ENCODE measurements at regions of chr12 and their contacts with region 1.

Region 1: GRCh38 chr12:53675651-53676453 is at the start of gene ATP5MC2:
- DNase-seq: peak; percentile 98
- H3K4me3 ChIP-seq: peak within 1 kb of the TSS; percentile 53 to 70 (median 61)
- H3K27ac ChIP-seq: peak within 1 kb of the TSS; percentile 51
- H3K4me1 ChIP-seq: peaks cover 23% of the 10 kb centered on the region
- H3K27me3 ChIP-seq: no peaks in the 10 kb centered on the region
- CTCF ChIP-seq: peak; percentile 95 to 100
- total RNA-seq, gene ATP5MC2: 47.2 to 140 TPM

Region 2: DNA sequence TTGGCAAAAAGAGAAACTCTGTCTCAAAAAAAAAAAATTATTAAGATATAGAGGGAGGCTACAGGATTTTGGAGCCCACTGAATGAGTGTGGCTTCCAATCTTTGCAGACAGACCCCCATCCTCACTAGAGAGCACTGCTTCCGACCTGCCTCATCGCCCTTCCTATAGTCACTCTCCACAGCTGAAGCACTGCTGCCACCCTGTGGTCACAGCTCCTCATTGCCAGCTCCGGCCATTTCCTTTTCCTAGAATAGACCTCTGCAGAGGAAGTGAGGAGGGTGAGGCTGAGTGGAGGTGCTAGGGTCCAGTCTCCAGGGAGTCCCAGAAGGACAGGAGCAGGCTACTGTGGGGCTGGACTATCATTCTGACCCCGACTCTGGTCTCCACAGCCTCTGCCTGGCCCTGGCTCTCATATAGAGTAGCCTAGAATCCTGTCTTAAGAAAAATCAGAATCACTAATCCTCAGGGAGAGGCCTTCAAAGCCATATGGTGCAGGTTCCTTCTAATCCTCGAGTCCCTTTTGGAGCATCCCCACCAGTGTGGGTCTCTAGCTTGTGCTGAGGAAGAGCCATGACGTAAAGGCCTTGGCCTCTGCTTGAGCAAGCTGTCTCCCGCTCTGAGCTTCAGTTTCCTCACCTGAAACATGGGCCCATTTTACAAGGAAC is 167.2 kb before region 1 on chr12:
- CTCF ChIA-PET with region 1: no interaction called
- dilution Hi-C with region 1: no loop called
- in situ Hi-C with region 1: no loop called
- intact Hi-C with region 1: loop called (anchors 1 kb)
- DNase-seq: peak; percentile 61
- H3K4me3 ChIP-seq: no peak overlapping the region
- H3K27ac ChIP-seq: no peak overlapping the region
- H3K4me1 ChIP-seq: no peaks in the 10 kb centered on the region
- H3K27me3 ChIP-seq: no peaks in the 10 kb centered on the region
- CTCF ChIP-seq: peak; percentile 93 to 97

Region 3: DNA sequence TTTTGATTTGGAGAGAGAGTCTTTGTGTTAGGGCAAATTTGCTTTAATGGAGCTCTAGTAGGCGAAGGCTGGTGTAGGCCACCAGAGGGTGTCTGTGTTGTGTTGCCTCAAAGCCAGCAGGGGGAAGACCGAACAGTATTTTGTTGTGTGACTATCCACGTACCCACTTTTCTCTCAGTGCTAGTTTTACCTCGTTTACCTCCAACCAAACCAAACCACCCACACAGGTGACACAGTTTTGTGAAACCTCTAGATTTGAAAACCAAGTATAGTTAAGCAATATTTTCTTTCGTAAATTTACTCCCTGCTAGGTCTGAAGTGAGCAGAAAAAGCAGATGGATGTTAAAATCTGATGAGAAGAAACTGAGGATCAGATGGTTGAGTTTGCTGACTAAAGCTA is 132.3 kb before region 1 on chr12:
- CTCF ChIA-PET with region 1: interaction called, 8 read pairs
- dilution Hi-C with region 1: no loop called
- in situ Hi-C with region 1: loop called (anchors 5 kb)
- intact Hi-C with region 1: loop called (anchors 1 kb)
- DNase-seq: peak; percentile 62
- H3K4me3 ChIP-seq: no peak overlapping the region
- H3K27ac ChIP-seq: no peak overlapping the region
- H3K4me1 ChIP-seq: peaks cover 2% of the 10 kb centered on the region
- H3K27me3 ChIP-seq: no peaks in the 10 kb centered on the region
- CTCF ChIP-seq: peak; percentile 80 to 87

Region 4: DNA sequence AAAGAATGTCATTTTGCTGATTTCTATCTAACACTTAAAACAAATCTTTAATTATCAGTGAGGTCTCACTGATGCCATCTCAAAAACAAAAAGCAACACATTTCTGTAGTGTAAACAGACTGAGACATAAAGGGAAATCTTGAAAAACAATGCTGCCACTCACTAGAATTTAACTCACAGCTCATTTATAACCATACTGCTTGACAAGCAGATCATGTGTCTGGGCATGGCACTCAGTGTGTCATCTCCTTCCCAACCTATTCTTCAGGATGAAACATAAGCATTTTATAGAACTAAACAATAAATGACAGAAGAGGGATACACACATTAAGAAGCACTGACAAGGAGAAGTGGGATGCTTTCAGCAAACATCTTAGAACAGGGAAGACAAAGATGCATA is 72.0 kb before region 1 on chr12:
- CTCF ChIA-PET with region 1: no interaction called
- dilution Hi-C with region 1: no loop called
- in situ Hi-C with region 1: no loop called
- intact Hi-C with region 1: loop called (anchors 1 kb)
- DNase-seq: no peak
- H3K4me3 ChIP-seq: no peak overlapping the region
- H3K27ac ChIP-seq: no peak overlapping the region
- H3K4me1 ChIP-seq: peaks cover 12% of the 10 kb centered on the region
- H3K27me3 ChIP-seq: no peaks in the 10 kb centered on the region
- CTCF ChIP-seq: no peak

Region 5: DNA sequence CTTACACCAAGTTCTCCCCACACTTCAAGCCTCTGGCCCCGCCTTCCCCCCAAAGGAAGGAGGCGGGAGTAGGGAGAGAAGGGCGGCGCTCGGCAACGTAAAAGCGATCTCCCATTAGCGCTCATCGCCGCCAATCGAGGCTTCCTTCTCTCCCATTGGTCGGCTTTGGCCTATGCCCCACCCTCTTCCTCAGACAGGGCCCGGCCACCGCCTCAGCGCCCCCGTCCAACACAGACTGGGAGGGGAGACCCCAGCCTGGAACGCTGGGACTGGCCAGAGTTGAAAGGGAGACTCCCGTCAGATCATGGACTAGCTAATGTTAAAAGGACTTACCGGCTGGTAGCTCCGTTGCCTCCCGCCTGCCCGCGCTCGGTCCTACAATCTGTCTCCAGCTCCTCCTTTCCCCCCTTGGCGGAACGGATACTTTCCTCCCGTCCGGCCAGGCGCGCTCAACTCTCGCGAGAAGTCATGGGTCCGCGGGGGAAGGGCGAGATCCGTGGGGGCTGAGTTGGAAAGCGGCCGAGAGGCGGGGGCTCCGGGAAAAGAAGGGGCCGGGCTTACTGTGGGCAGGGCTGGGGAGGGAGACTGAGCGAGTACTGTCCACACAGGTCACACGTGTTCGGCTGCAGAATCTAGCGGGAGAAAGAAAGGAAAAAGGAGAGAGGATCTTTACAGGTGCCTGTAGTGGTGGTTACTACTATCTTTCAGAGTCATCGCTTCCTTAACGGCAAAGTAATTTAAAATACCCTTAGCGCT is 49.7 kb before region 1 on chr12 and contains the start of gene ATF7:
- CTCF ChIA-PET with region 1: no interaction called
- dilution Hi-C with region 1: no loop called
- in situ Hi-C with region 1: loop called in 1 of 2 experiments (anchors 10 kb)
- intact Hi-C with region 1: loop called (anchors 1 kb)
- DNase-seq: peak; percentile 95
- H3K4me3 ChIP-seq: peak within 1 kb of the TSS; percentile 77 to 86 (median 83)
- H3K27ac ChIP-seq: peak within 1 kb of the TSS; percentile 96
- H3K4me1 ChIP-seq: peaks cover 18% of the 10 kb centered on the region
- H3K27me3 ChIP-seq: no peaks in the 10 kb centered on the region
- CTCF ChIP-seq: no peak
- total RNA-seq, gene ATF7: 11.2 to 26.5 TPM

Region 6: GRCh38 chr12:53638057-53638456 is 37.8 kb before region 1 on chr12:
- CTCF ChIA-PET with region 1: no interaction called
- dilution Hi-C with region 1: loop called (anchors 5 kb)
- in situ Hi-C with region 1: no loop called
- intact Hi-C with region 1: no loop called
- DNase-seq: no peak
- H3K4me3 ChIP-seq: no peak overlapping the region
- H3K27ac ChIP-seq: no peak overlapping the region
- H3K4me1 ChIP-seq: no peaks in the 10 kb centered on the region
- H3K27me3 ChIP-seq: no peaks in the 10 kb centered on the region
- CTCF ChIP-seq: no peak

Region 7: GRCh38 chr12:53696285-53696654 is 20.4 kb after region 1 on chr12:
- CTCF ChIA-PET with region 1: no interaction called
- dilution Hi-C with region 1: no loop called
- in situ Hi-C with region 1: no loop called
- intact Hi-C with region 1: no loop called
- DNase-seq: peak; percentile 51
- H3K4me3 ChIP-seq: no peak overlapping the region
- H3K27ac ChIP-seq: no peak overlapping the region
- H3K4me1 ChIP-seq: peaks cover 6% of the 10 kb centered on the region
- H3K27me3 ChIP-seq: peaks cover 2% of the 10 kb centered on the region
- CTCF ChIP-seq: no peak

Region 8: GRCh38 chr12:53727310-53728041 is 51.6 kb after region 1 on chr12 and contains the start of gene CALCOCO1:
- CTCF ChIA-PET with region 1: no interaction called
- dilution Hi-C with region 1: loop called (anchors 5 kb)
- in situ Hi-C with region 1: no loop called
- intact Hi-C with region 1: no loop called
- DNase-seq: peak; percentile 98
- H3K4me3 ChIP-seq: peak within 1 kb of the TSS; percentile 57 to 69 (median 59)
- H3K27ac ChIP-seq: peak within 1 kb of the TSS; percentile 55
- H3K4me1 ChIP-seq: peaks cover 15% of the 10 kb centered on the region
- H3K27me3 ChIP-seq: no peaks in the 10 kb centered on the region
- CTCF ChIP-seq: no peak
- total RNA-seq, gene CALCOCO1: 61.1 to 127 TPM

Region 9: DNA sequence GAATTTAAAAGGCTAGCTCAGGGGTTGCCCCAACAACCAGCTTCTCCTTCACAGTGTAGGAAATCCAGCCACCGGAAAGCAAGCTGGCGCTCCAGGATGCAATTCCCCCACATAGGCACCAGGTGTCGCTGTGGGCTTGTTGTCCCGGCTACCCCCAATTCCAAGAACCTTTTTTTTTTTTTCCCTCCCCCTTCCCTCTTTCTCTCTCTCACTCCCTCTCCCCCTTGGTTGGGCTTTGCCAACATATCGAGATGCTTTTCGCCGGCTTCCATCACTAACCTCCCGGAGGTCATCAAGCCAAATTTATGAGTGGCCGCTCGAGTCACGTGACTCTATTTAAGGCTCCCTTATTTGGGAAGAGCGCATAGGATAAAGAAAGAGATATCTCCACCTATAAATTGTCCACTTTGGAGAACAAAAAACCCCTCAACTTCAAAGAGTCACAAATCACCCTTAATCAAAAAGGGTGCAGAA is 356.8 kb after region 1 on chr12 and contains the start of gene HOXC5:
- CTCF ChIA-PET with region 1: no interaction called
- dilution Hi-C with region 1: no loop called
- in situ Hi-C with region 1: no loop called
- intact Hi-C with region 1: no loop called
- DNase-seq: peak; percentile 53
- H3K4me3 ChIP-seq: peak within 1 kb of the TSS; percentile 47 to 60 (median 54)
- H3K27ac ChIP-seq: peak within 1 kb of the TSS; percentile 33
- H3K4me1 ChIP-seq: peaks cover 30% of the 10 kb centered on the region
- H3K27me3 ChIP-seq: no peaks in the 10 kb centered on the region
- CTCF ChIP-seq: peak; percentile 94 to 95
- total RNA-seq, gene HOXC5: 0.67 to 1.4 TPM

Measured in mammary epithelial cell (primary cell).